Colonic mucosa (tissue), 4 donors: ENCODE measurements at regions of chr6 and their contacts with region 1.

Region 1: DNA sequence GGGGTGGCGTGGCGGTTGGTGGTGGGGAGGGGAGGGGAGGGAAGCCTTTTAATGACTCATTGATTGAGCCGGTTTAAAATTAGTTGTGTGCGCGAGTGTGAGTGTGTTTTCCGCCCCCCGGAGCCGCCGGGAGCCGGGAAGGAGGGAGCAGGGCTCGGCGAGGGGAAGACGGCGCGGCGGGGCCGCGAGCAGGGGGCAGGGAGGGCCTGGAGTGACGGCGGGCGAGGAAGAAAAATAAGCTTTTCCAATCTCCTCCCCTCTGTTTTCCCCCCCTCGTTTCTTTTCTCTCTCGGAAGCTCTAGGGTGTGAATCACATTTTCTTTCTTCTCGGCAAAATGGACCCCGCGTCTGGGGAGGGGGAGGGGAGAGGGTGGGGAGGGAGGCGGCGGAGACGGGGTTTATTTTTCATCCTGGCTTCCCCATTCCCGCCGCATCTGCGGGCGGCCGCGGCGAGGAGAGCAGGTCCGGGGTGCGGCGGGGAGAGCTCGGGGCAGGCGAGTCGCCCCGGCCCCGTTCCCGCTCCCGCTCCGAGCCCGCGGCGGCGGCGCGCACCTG is 847 bp downstream of the BICRAL start:
- DNase-seq: peak; percentile 80
- H3K4me3 ChIP-seq: peak overlapping the region; percentile 86
- H3K27ac ChIP-seq: peak overlapping the region; percentile 100
- H3K4me1 ChIP-seq: peaks cover 9% of the 10 kb centered on the region
- H3K27me3 ChIP-seq: no peaks in the 10 kb centered on the region
- CTCF ChIP-seq: no peak

Region 2: DNA sequence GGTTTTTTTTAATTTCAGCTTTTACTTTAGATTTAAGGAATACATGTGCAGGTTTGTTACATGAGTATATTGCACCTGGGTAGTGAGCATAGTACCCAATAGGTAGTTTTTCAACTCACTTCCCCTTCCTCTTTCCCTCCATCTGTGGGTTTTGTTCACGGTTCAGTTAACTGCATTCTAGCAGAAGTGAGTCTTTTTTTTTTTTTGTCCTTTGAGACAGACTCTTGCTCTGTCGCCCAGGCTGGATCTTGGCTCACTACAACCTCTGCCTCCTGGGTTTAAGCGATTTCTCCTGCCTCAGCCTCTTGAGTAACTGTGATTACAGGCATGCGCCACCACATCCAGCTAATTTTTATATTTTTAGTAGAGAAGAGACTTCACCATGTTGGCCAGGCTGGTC is 210.2 kb before region 1 on chr6:
- intact Hi-C with region 1: no loop called
- DNase-seq: no peak
- H3K4me3 ChIP-seq: no peak overlapping the region
- H3K27ac ChIP-seq: no peak overlapping the region
- H3K4me1 ChIP-seq: peaks cover 4% of the 10 kb centered on the region
- H3K27me3 ChIP-seq: no peaks in the 10 kb centered on the region
- CTCF ChIP-seq: no peak

Region 3: GRCh38 chr6:42745707-42746462 is 36.8 kb before region 1 on chr6 and contains the start of gene TBCC:
- intact Hi-C with region 1: loop called (anchors 5 kb)
- DNase-seq: peak; percentile 98
- H3K4me3 ChIP-seq: peak within 1 kb of the TSS; percentile 61
- H3K27ac ChIP-seq: peak within 1 kb of the TSS; percentile 96
- H3K4me1 ChIP-seq: peaks cover 5% of the 10 kb centered on the region
- H3K27me3 ChIP-seq: no peaks in the 10 kb centered on the region
- CTCF ChIP-seq: no peak
- total RNA-seq, gene TBCC: 24.2 to 24.8 TPM

Region 4: DNA sequence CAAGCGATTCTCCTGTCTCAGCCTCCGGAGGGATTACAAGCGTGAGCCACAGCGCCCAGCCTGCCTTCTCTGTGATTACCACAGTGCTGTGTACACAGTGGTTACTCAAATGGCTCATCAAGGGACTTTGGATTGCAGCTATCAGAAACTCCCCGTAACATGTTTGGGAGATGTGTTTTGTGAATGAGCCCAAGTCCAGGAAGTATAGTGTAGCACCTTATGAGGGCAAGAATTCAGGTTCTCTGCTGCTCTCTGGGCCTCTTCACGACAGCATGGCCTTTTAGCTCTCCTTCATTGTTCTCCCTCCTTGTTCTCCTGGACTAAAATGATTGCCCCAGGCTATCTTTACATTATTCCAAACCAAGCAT is 62.6 kb after region 1 on chr6:
- intact Hi-C with region 1: loop called (anchors 10 kb)
- DNase-seq: peak; percentile 68
- H3K4me3 ChIP-seq: no peak overlapping the region
- H3K27ac ChIP-seq: peak overlapping the region; percentile 54
- H3K4me1 ChIP-seq: no peaks in the 10 kb centered on the region
- H3K27me3 ChIP-seq: no peaks in the 10 kb centered on the region
- CTCF ChIP-seq: no peak